A673 (cell line): ENCODE measurements at regions of chr12 and their contacts with region 1.

Region 1: GRCh38 chr12:108618079-108618952 is 15.4 kb downstream of the SELPLG start:
- DNase-seq: peak; percentile 87
- H3K4me3 ChIP-seq: no peak overlapping the region
- H3K27ac ChIP-seq: no peak overlapping the region
- H3K4me1 ChIP-seq: peaks cover 8% of the 10 kb centered on the region
- H3K27me3 ChIP-seq: no peaks in the 10 kb centered on the region
- CTCF ChIP-seq: peak; percentile 97

Region 2: GRCh38 chr12:108570743-108571608 is 47.3 kb before region 1 on chr12:
- CTCF ChIA-PET with region 1: interaction called, 5 read pairs
- POLR2A ChIA-PET with region 1: interaction called, 15 read pairs
- intact Hi-C with region 1: loop called (anchors 2 kb)
- DNase-seq: peak; percentile 33
- H3K4me3 ChIP-seq: no peak overlapping the region
- H3K27ac ChIP-seq: no peak overlapping the region
- H3K4me1 ChIP-seq: peaks cover 29% of the 10 kb centered on the region
- H3K27me3 ChIP-seq: no peaks in the 10 kb centered on the region
- CTCF ChIP-seq: peak; percentile 31; the same call in 1 of the 2 replicates

Region 3: DNA sequence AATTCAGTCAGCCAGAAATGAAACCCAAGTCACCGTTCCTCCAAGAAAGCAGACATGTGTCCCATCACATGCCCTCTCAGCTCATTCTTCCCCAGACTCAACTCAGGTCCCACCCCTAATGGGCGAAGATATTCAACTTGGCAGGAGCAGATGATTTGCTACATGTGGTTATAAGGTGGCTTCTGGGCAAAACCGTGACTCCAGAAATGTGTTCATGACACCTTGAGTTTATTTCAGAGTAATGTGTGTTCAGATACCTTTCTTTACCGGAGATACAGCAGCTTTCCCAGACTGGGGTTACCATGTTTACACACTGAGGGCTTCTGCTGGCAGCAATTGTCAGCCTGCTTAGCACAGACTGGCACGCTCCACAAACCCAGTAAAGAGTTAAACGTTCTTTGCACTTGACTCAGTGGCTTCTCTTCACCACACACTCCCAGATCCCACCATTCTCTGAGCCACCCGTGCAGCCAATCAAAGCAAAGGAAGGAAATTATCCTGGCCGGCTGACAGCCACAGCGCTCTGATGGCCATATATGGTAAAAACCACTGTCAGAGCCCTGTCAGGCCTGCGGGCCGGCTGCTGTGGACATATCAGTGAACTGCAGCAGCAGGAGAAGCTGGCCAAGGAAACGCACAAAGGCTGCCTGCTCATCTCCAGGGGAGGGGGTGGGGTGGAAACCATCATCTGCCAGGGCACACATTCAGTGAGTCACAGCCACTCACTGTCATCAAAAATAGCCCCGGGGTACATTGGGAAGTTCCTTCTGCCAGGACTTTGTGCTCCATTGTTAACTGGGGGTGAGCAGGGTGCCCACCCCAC is 73.1 kb after region 1 on chr12:
- CTCF ChIA-PET with region 1: no interaction called
- POLR2A ChIA-PET with region 1: no interaction called
- intact Hi-C with region 1: no loop called
- DNase-seq: peak; percentile 94
- H3K4me3 ChIP-seq: no peak overlapping the region
- H3K27ac ChIP-seq: peak overlapping the region; percentile 96
- H3K4me1 ChIP-seq: peaks cover 51% of the 10 kb centered on the region
- H3K27me3 ChIP-seq: no peaks in the 10 kb centered on the region
- CTCF ChIP-seq: no peak